Caco-2 (cell line): ENCODE measurements at regions of chr3 and their contacts with region 1.

Region 1: DNA sequence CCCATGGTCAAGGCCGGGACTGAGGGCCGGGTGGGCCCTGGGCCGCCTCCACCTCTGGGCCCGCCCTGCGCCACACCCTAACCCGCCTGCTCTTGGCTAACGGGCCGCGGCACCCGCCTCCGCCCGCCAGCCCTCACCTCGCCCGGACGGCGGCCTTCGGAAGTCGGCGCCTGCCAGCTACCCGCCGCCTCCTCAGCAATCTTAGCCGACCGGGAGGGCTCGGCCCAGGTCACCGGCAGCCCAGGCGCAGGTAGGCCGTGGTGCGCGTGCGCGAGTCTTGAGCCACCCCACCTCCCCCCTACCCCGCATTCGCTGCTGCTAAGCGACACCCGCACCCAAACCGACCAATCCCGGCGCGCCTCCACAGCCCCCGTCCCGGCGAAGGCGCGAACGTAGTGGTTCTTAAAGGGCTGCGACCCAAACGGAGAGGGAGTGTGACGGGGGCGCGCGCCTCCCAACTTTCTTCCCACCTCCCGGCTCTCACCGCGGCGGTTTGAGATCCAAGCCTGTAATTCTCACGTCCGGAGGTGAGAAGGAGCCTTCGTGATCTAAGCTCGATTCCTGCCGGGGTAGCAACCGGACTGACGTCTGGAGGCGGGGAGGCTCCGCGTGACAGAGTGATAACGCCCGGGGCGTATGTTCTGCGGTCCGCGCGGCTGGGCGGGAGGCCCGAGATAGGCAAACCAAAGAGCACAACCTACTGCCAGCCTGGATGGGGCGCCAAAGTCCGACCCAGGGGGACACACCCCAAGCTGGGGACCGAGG is at the start of gene SEC22C:
- DNase-seq: peak; percentile 97 to 98
- H3K4me3 ChIP-seq: peak within 1 kb of the TSS; percentile 58
- H3K4me3 Mint-ChIP-seq: peak within 1 kb of the TSS; percentile 79
- H3K27ac Mint-ChIP-seq: peak within 1 kb of the TSS; percentile 87
- H3K4me1 ChIP-seq: peaks cover 12% of the 10 kb centered on the region
- H3K4me1 Mint-ChIP-seq: peaks cover 13% of the 10 kb centered on the region
- H3K27me3 ChIP-seq: no peaks in the 10 kb centered on the region
- H3K27me3 Mint-ChIP-seq: no peaks in the 10 kb centered on the region
- CTCF ChIP-seq: peak in 1 of 2 experiments; percentile 36
- total RNA-seq, gene SEC22C: 33.4 and 36.4 TPM in 2 replicates

Region 2: GRCh38 chr3:42600111-42600988 is 18.5 kb after region 1 on chr3 and contains the start of gene NKTR:
- CTCF ChIA-PET with region 1: interaction called, 9 read pairs
- POLR2A ChIA-PET with region 1: interaction called, 18 read pairs
- intact Hi-C with region 1: loop called (anchors 1 kb)
- DNase-seq: peak; percentile 99
- H3K4me3 ChIP-seq: peak within 1 kb of the TSS; percentile 84
- H3K4me3 Mint-ChIP-seq: peak within 1 kb of the TSS; percentile 93
- H3K27ac Mint-ChIP-seq: peak within 1 kb of the TSS; percentile 87
- H3K4me1 ChIP-seq: peaks cover 17% of the 10 kb centered on the region; the same call in 1 of the 2 replicates
- H3K4me1 Mint-ChIP-seq: peaks cover 10% of the 10 kb centered on the region
- H3K27me3 ChIP-seq: no peaks in the 10 kb centered on the region
- H3K27me3 Mint-ChIP-seq: no peaks in the 10 kb centered on the region
- CTCF ChIP-seq: peak in 1 of 2 experiments; percentile 15
- total RNA-seq, gene NKTR: 66.6 and 67.9 TPM in 2 replicates

Region 3: GRCh38 chr3:42652611-42653302 is 70.9 kb after region 1 on chr3:
- CTCF ChIA-PET with region 1: no interaction called
- POLR2A ChIA-PET with region 1: no interaction called
- intact Hi-C with region 1: loop called (anchors 5 kb)
- DNase-seq: no peak
- H3K4me3 ChIP-seq: peak overlapping the region; percentile 79; the same call in 1 of the 2 replicates
- H3K4me3 Mint-ChIP-seq: peak overlapping the region; percentile 86
- H3K27ac Mint-ChIP-seq: peak overlapping the region; percentile 73
- H3K4me1 ChIP-seq: peaks cover 19% of the 10 kb centered on the region
- H3K4me1 Mint-ChIP-seq: no peaks in the 10 kb centered on the region
- H3K27me3 ChIP-seq: no peaks in the 10 kb centered on the region
- H3K27me3 Mint-ChIP-seq: no peaks in the 10 kb centered on the region
- CTCF ChIP-seq: no peak

Region 4: GRCh38 chr3:42749753-42750231 is 167.9 kb after region 1 on chr3:
- CTCF ChIA-PET with region 1: interaction called, 4 read pairs
- POLR2A ChIA-PET with region 1: no interaction called
- intact Hi-C with region 1: loop called (anchors 5 kb)
- DNase-seq: peak in 1 of 2 experiments; percentile 17
- H3K4me3 ChIP-seq: no peak overlapping the region
- H3K4me3 Mint-ChIP-seq: no peak overlapping the region
- H3K27ac Mint-ChIP-seq: no peak overlapping the region
- H3K4me1 ChIP-seq: no peaks in the 10 kb centered on the region
- H3K4me1 Mint-ChIP-seq: no peaks in the 10 kb centered on the region
- H3K27me3 ChIP-seq: no peaks in the 10 kb centered on the region
- H3K27me3 Mint-ChIP-seq: no peaks in the 10 kb centered on the region
- CTCF ChIP-seq: peak; percentile 37 to 52